Psoas muscle (tissue), 8 donors: ENCODE measurements at regions of chr18 and their contacts with region 1.

Region 1: DNA sequence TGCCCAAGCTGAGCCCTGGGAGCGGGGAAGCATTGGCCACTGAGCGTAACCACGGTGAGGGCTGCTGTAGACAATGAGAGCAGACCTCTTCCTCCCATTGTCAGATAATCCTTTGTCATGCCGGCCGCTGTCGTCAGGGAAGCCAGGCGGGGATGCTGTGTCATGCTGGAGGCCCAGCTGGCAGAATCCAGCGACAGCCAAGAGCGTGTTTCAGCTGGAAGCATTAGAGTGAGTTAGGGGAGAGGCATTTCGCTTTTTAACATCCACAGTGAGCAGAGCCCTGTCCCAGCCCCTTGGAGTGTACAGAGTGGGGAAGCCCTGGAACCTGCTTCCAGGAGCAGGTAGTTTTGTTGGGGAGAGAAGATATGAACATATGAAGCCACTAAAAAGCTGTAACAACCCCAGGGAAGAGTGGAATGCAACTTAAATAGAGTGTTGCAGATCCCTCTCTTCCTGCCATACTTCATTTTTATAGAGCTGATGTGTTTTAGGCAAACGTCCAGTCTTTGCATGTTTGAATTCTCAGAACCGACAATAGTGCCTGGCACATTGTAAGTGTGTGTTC is 7.0 kb downstream of the CTIF start:
- DNase-seq: peak; percentile 72 to 78
- ATAC-seq: peak; percentile 41 to 55 (median 50)
- H3K4me3 ChIP-seq: peak overlapping the region; percentile 19
- H3K27ac ChIP-seq: peak overlapping the region; percentile 73
- H3K4me1 ChIP-seq: peaks cover 80% of the 10 kb centered on the region
- H3K27me3 ChIP-seq: no peaks in the 10 kb centered on the region
- CTCF ChIP-seq: no peak

Region 2: DNA sequence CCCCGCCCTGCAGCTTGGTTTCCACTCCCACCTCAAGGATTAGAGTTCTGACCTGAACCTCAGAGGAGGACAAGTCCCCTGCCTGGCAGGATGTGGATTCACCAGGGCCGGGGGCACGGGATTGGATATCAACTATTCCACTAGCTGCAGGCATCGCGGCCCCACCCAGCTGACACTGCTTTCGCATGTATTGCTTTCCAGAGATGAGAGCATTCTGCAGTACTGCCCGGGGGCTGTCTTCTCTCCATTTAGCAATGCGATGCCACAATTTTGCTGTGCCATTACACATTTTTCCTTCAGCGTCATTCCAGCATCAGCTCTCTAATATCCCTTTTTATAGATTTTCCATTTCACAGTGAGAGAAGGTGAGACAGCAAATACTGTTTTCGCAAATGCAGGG is 34.9 kb after region 1 on chr18:
- intact Hi-C with region 1: loop called (anchors 5 kb)
- DNase-seq: peak in 1 of 2 donors; percentile 46
- ATAC-seq: no peak
- H3K4me3 ChIP-seq: no peak overlapping the region
- H3K27ac ChIP-seq: no peak overlapping the region
- H3K4me1 ChIP-seq: peaks cover 22% of the 10 kb centered on the region
- H3K27me3 ChIP-seq: no peaks in the 10 kb centered on the region
- CTCF ChIP-seq: no peak